HEK293 (cell line): ENCODE measurements at regions of chr11 and their contacts with region 1.

Region 1: DNA sequence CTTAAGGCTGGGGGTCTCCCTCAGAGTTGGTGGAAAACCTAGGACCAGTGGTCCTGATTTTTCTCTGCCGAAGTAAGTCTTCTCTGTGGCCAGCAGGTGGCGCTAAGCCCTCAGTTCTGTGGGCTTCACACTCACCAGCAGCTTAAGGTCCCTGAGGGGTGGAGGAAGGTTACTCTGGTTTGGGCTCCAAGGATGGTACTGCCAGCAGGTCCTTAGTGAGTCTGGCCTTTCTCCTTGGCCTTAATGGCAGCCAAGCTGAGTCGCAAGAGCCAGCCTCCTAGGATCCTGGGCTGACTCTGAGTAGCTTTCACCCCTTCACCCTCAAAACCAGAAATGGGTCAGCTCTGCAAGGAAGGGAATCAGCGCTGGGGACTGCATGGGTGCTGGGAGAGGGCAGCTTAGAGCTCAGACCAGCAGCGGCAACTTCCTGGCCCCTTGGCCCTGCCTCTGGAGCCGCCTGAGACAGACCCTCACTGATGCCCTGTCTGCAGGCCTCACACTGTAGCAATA is 4.4 kb downstream of the KCNJ11 start:
- H3K4me3 ChIP-seq: no peak overlapping the region
- H3K27ac ChIP-seq: no peak overlapping the region
- H3K4me1 ChIP-seq: no peaks in the 10 kb centered on the region
- CTCF ChIP-seq: peak; percentile 79

Region 2: DNA sequence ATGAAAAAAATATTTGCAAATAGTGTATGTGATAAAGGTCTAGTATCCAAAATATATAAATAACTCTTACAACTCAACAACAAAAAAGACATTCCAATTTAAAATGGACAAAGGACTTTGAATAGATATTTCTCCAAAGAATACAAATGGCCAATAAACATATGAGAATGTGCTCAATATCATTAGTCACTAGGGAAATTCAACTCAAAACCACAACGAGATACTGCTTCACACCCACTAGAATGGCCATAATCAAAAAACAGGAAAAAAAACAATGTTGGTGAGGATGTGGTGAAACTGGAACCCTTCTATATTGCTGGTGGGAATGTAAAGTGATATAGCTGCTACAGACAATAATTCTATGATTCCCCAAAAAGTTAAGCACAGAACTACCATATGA is 267.9 kb before region 1 on chr11:
- CTCF ChIA-PET with region 1: no interaction called
- POLR2A ChIA-PET with region 1: no interaction called
- H3K4me3 ChIP-seq: no peak overlapping the region
- H3K27ac ChIP-seq: no peak overlapping the region
- H3K4me1 ChIP-seq: no peaks in the 10 kb centered on the region
- CTCF ChIP-seq: no peak

Region 3: DNA sequence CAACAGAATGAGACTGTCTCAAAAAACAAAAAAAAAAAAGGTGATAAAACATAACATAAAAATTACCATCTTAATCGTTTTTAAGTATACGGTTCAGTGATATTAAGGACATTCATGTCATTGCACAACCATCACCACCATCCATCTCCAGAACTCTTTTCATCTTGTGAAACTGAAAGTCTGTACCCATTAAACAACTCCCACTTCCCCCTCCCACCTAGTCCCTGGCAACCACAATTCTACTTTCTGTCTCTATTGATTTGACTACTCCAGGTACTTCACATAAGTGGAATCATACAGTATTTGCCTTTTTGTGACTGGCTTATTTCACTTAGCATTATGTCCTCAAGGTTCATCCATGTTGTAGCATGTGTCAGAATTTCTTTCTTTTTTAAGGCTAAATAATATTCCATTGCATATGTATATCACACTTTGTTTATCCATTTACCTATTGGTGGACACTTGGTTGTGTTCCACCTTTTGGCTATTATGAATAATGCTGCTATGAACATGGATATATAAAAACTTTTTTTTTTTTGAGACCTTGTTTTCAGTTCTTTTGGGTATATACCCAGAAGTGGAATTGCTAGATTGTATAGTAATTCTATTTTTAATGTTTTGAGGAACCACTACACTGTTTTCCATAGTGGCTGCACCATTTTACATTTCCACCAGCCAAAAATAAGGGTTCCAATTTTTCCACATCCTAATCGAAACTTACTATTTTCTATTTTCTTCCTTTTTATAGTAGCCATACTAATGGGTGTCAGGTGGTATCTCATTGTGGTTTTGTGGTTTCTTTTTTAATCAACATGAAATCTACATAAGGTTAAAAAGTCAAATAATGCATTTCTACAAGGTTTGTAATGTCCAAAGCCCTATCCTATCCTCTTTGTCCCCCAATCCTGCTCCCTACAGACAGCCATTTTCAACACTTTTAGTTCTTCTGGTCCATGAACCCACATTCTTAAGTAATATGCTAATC is 152.9 kb before region 1 on chr11:
- CTCF ChIA-PET with region 1: interaction called, 19 read pairs
- POLR2A ChIA-PET with region 1: no interaction called
- H3K4me3 ChIP-seq: no peak overlapping the region
- H3K27ac ChIP-seq: no peak overlapping the region
- H3K4me1 ChIP-seq: no peaks in the 10 kb centered on the region
- CTCF ChIP-seq: no peak

Region 4: GRCh38 chr11:17298302-17298701 is 85.8 kb before region 1 on chr11:
- CTCF ChIA-PET with region 1: no interaction called
- POLR2A ChIA-PET with region 1: no interaction called
- H3K4me3 ChIP-seq: no peak overlapping the region
- H3K27ac ChIP-seq: no peak overlapping the region
- H3K4me1 ChIP-seq: no peaks in the 10 kb centered on the region
- CTCF ChIP-seq: no peak

Region 5: DNA sequence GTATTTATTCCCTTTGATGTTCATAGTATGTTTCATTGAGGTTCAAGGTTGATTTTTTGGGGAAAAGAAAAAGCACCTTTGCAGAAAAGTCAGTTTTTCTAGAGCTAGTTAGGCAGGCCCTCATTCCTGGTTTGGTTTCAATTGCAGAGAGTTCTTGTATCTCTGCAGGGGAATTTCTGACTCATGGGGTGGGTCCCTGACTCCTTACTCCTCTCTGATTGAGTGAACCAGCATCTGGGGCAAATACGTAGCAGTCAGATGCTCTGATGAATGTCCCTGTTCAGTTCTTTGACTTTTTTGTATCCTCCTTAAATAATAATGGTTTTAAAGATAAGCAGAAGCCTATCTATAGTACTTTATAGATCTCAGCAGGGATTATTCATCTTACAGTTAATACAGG is 40.1 kb before region 1 on chr11:
- CTCF ChIA-PET with region 1: no interaction called
- POLR2A ChIA-PET with region 1: no interaction called
- H3K4me3 ChIP-seq: no peak overlapping the region
- H3K27ac ChIP-seq: no peak overlapping the region
- H3K4me1 ChIP-seq: no peaks in the 10 kb centered on the region
- CTCF ChIP-seq: no peak

Region 6: GRCh38 chr11:17366495-17366894 is 17.6 kb before region 1 on chr11:
- CTCF ChIA-PET with region 1: interaction called, 41 read pairs
- POLR2A ChIA-PET with region 1: interaction called, 3 read pairs
- H3K4me3 ChIP-seq: no peak overlapping the region
- H3K27ac ChIP-seq: no peak overlapping the region
- H3K4me1 ChIP-seq: no peaks in the 10 kb centered on the region
- CTCF ChIP-seq: no peak

Region 7: GRCh38 chr11:17476317-17477083 is 92.4 kb after region 1 on chr11 and contains the start of gene ABCC8:
- CTCF ChIA-PET with region 1: interaction called, 13 read pairs
- POLR2A ChIA-PET with region 1: no interaction called
- H3K4me3 ChIP-seq: peak within 1 kb of the TSS; percentile 64
- H3K27ac ChIP-seq: no peak within 1 kb of the TSS
- H3K4me1 ChIP-seq: no peaks in the 10 kb centered on the region; the same call in 1 of the 2 replicates
- CTCF ChIP-seq: peak; percentile 29; the same call in 1 of the 2 replicates

Region 8: GRCh38 chr11:17504330-17505107 is 120.5 kb after region 1 on chr11:
- CTCF ChIA-PET with region 1: interaction called, 318 read pairs
- POLR2A ChIA-PET with region 1: interaction called, 3 read pairs
- H3K4me3 ChIP-seq: no peak overlapping the region
- H3K27ac ChIP-seq: no peak overlapping the region
- H3K4me1 ChIP-seq: no peaks in the 10 kb centered on the region
- CTCF ChIP-seq: peak; percentile 72

Region 9: DNA sequence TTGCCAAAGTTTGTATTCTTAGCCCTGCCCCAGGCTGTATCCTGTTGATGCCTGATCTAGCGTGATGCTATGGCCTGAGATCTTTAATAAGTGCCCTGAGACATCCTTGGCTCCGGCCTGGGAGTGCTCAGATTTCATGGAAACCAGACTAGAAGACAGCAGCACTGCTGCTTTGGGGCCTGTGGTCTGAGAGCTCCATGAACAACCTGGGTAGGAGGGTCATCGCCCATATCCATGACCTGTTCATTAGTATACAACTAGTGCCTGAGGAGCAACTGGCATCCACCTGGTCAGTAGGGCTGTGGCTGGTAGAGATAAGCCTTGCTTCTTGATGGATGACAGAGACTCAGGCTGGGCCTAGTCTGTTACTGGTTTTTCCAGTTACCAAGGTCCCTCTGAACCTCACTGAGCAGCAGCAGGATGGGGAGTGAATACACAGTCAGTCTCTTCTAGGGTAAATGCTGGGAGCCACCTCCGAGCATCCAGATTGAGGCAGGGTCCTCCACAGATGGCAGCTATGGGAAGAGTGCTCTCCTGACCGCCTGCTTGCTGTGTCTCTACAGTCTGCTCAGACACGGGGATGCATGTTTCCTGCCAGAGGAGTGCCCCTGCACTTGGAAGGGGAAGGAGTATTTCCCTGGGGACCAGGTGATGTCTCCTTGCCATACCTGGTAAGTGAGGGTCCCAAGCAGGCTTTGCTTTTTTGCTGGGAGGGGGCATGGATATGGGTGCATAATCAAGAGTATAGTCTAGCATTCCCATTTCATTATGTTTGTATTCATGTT is 202.0 kb after region 1 on chr11:
- CTCF ChIA-PET with region 1: no interaction called
- POLR2A ChIA-PET with region 1: no interaction called
- H3K4me3 ChIP-seq: no peak overlapping the region
- H3K27ac ChIP-seq: no peak overlapping the region
- H3K4me1 ChIP-seq: no peaks in the 10 kb centered on the region
- CTCF ChIP-seq: no peak